ENCODE measurements at regions of chr5 and their contacts with region 1.

Region 1: GRCh38 chr5:157651623-157652549 is at the start of gene SOX30:
- DNase-seq: peak; percentile 77
- ATAC-seq: peak; percentile 97
- H3K4me3 Mint-ChIP-seq: peak within 1 kb of the TSS; percentile 84
- H3K27ac Mint-ChIP-seq: peak within 1 kb of the TSS; percentile 86
- H3K4me1 Mint-ChIP-seq: peaks cover 50% of the 10 kb centered on the region
- H3K27me3 Mint-ChIP-seq: no peaks in the 10 kb centered on the region
- CTCF ChIP-seq: no peak
- total RNA-seq, gene SOX30: 0.37 and 0.47 TPM in 2 replicates

Region 2: GRCh38 chr5:157342822-157343402 is 309.0 kb before region 1 on chr5:
- CTCF ChIA-PET with region 1: no interaction called
- POLR2A ChIA-PET with region 1: no interaction called
- intact Hi-C with region 1: no loop called
- DNase-seq: peak; percentile 27
- ATAC-seq: peak; percentile 50
- H3K4me3 Mint-ChIP-seq: no peak overlapping the region
- H3K27ac Mint-ChIP-seq: no peak overlapping the region
- H3K4me1 Mint-ChIP-seq: no peaks in the 10 kb centered on the region
- H3K27me3 Mint-ChIP-seq: no peaks in the 10 kb centered on the region
- CTCF ChIP-seq: no peak

Region 3: GRCh38 chr5:157486221-157486681 is 165.6 kb before region 1 on chr5:
- CTCF ChIA-PET with region 1: interaction called, 3 read pairs
- POLR2A ChIA-PET with region 1: interaction called, 3 read pairs
- intact Hi-C with region 1: loop called (anchors 2 kb)
- DNase-seq: no peak
- ATAC-seq: peak; percentile 33
- H3K4me3 Mint-ChIP-seq: peak overlapping the region; percentile 56
- H3K27ac Mint-ChIP-seq: peak overlapping the region; percentile 95
- H3K4me1 Mint-ChIP-seq: peaks cover 86% of the 10 kb centered on the region
- H3K27me3 Mint-ChIP-seq: no peaks in the 10 kb centered on the region
- CTCF ChIP-seq: no peak

Region 4: DNA sequence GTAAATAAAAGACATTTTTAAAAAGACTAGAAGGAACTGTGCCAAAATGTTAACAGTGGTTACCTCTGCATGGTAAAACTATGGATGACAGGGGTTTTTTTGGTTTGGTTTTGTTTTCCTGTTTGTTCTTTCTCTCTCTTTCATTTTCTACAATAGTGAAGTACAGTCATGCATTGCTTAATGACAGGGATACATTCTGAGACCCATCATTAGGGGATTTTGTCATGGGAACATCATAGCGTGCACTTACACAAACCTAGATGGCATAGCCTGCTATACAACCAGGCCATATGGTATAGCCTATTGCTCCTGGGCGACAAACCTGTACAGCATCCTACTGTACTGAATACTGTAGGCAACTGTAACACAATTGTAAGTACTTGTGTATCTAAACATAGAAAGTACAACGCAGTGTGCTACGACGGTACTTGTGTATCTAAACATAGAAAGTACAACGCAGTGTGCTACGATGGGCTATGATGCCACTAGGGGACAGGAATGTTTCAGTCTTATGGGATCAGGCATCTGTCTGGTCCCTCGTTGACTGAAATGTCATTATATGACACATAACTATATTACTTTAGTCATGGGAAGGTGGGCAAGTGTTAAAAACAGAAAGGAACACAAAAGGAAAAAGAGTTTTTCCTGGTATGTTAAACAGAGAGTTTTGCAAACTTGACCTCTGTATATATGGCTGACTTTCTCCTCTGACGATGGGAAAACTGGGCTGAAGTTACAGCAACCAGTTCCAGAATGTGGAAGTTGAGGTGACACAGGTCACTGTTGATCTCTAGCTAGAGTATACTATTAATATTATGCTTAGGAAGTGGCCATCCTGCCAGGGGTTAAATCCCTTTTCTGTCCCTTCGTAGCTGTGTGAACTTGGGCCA is 68.9 kb before region 1 on chr5:
- CTCF ChIA-PET with region 1: no interaction called
- POLR2A ChIA-PET with region 1: interaction called, 10 read pairs
- intact Hi-C with region 1: no loop called
- DNase-seq: no peak
- ATAC-seq: peak; percentile 56
- H3K4me3 Mint-ChIP-seq: peak overlapping the region; percentile 1
- H3K27ac Mint-ChIP-seq: peak overlapping the region; percentile 62
- H3K4me1 Mint-ChIP-seq: peaks cover 54% of the 10 kb centered on the region
- H3K27me3 Mint-ChIP-seq: no peaks in the 10 kb centered on the region
- CTCF ChIP-seq: no peak

Region 5: DNA sequence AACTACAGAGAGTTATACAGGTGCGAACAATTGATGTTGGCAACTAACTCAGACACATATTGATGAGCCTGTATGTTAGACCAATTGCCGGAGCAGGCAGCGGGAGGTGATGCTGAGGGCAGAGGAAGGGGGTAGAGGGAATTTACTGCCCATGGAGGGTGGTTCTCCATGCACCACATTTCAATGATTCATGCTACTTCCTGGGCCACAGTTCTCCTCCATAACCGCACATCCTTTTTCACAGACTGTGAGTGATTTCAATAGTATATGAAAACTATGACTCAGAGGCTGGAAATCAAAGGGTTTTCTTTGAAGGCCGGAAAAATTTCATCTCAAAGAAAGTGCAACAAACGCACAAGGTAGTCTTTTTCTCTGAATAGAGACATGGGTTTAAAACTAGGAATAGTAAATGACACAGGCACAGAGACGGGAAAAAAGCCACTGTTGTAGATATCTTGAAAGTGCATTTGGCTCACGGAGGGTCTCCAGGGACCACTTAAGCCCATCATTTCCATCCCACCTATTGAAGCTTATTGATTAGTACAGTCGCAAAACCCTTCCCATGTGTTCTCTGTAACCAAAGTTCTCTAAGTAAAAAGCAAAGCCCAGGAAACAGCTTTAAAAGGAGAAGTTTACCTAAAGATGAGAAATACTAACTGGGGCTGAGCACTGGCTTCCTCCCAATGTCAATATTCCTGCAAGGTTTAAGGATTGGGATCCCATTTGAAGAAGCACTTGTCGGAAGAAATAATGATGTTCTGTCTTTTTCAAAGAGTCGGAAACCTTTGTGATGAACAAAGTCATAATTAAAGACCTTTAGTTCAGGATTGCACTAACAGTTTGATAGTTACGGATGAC is 48.3 kb before region 1 on chr5:
- CTCF ChIA-PET with region 1: no interaction called
- POLR2A ChIA-PET with region 1: interaction called, 6 read pairs
- intact Hi-C with region 1: loop called (anchors 1 kb)
- DNase-seq: no peak
- ATAC-seq: peak; percentile 48
- H3K4me3 Mint-ChIP-seq: peak overlapping the region; percentile 25
- H3K27ac Mint-ChIP-seq: peak overlapping the region; percentile 83
- H3K4me1 Mint-ChIP-seq: peaks cover 85% of the 10 kb centered on the region
- H3K27me3 Mint-ChIP-seq: no peaks in the 10 kb centered on the region
- CTCF ChIP-seq: no peak

Region 6: DNA sequence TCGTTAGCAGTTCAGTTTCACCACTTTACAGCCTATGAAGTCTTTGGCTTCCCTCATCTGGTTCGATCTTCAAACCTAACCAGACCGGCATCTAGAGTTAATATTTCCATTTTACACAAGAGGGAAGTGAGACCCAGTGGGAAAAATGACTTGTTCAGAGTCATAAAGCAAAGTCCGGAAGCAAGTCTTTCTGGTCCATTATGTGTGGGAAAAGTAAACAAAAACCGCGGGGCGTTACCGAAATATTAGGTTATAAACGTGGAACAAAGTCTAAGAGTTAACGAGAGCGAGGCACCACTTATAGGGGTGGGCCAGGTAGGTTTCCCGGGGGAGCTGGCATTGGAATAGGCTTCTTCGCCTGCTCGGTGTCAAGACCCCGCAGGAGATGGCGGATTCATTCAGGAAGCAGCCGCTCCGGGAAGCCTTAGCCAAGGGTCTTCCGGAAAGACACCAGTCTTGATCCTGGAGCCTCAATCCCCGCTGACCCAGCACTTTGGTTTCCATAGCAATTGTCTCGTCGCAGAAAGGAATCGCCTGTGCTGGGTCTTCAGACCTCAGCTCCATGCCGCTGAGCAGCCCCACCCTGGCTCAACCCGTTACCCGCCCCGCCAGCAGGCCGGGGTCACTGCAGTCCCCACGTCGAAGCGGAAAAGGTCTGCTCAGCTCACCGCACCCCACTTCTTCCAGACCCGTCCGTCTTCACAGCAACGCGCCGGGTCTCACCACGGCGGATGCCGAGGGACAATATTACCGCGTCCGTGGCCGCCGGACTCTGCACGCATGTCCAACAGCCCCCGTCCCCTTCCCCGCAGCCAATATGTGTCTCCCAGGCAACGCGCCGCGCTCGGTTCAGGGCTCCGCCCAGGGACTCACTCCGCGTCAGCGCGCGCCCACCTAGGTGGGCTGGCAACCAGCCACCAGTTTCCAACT is 19.0 kb after region 1 on chr5 and contains the start of gene C5orf52:
- CTCF ChIA-PET with region 1: interaction called, 3 read pairs
- POLR2A ChIA-PET with region 1: interaction called, 4 read pairs
- intact Hi-C with region 1: loop called (anchors 2 kb)
- DNase-seq: no peak
- ATAC-seq: peak; percentile 55
- H3K4me3 Mint-ChIP-seq: peak within 1 kb of the TSS; percentile 95
- H3K27ac Mint-ChIP-seq: peak within 1 kb of the TSS; percentile 65
- H3K4me1 Mint-ChIP-seq: peaks cover 28% of the 10 kb centered on the region
- H3K27me3 Mint-ChIP-seq: no peaks in the 10 kb centered on the region
- CTCF ChIP-seq: no peak
- total RNA-seq, gene C5orf52: not detected in 2 replicates

Region 7: DNA sequence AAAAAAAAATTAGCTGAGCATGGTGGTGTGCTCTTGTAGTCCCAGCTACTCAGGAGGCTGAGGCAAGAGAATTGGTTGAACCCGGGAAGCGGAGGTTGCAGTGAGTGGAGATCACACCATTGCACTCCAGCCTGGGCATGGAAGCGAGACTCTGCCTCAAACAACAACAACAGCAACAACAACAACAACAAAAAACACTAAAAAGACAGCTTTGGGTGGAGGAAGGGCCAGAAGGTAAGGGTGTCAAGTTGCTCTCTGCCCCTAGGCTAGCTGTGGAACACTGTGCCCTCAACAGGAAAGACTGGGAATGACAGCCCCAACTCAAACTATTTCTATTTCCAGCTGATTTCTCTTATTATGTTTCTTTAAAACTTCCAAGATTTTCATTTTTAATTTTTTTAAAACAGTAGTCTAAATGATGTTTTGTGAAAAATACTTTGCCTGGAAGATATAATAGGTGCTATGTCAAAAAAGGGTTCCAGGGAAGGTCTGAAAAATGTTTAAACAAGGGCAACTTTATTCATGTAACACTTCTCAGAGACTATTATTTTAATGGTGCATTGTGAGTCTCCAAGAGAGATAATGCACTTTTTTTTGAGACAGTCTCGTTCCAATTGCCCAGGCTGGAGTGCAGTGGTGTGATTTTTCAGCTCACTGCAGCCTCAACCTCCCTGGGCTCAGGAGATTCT is 177.2 kb after region 1 on chr5:
- CTCF ChIA-PET with region 1: no interaction called
- POLR2A ChIA-PET with region 1: no interaction called
- intact Hi-C with region 1: no loop called
- DNase-seq: no peak
- ATAC-seq: no peak
- H3K4me3 Mint-ChIP-seq: no peak overlapping the region
- H3K27ac Mint-ChIP-seq: peak overlapping the region; percentile 31
- H3K4me1 Mint-ChIP-seq: peaks cover 69% of the 10 kb centered on the region
- H3K27me3 Mint-ChIP-seq: no peaks in the 10 kb centered on the region
- CTCF ChIP-seq: no peak

Region 8: DNA sequence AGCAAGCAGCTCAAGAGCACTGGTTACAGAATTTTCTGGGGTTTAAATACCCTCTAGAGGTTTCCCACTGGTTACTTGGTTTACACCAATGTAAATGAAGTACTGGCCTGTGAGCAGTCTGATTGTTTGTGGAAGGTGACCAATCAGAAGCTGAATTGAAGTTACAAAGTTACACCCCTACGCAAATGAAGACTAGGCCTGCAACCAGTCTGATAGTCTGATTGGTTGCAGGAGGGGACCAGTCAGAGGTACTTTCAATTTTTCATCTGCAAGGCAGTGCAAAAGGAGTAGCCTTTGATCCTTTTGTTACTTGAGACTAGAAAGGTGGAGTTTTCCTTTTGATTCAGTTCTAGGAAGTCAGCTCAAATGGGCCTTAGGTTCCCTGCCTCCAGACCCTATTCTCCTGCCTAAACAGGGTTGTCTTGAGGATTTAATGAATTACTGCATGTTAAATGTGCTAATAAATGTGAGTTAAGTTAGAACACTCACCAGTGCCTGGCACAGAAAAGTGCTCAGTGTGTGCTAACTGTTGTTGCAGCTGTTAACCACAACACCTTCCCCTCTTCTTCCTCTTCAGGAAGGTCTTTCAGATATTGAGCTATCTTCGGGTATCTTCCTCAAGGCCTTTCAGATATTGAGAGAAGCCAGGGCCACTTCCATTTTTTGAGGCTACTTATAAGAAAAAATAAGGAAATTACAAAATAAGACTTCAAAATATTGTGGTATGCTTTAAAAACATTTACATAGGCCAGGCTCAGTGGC is 239.1 kb after region 1 on chr5:
- CTCF ChIA-PET with region 1: no interaction called
- POLR2A ChIA-PET with region 1: no interaction called
- intact Hi-C with region 1: no loop called
- DNase-seq: no peak
- ATAC-seq: no peak
- H3K4me3 Mint-ChIP-seq: no peak overlapping the region
- H3K27ac Mint-ChIP-seq: no peak overlapping the region
- H3K4me1 Mint-ChIP-seq: no peaks in the 10 kb centered on the region
- H3K27me3 Mint-ChIP-seq: no peaks in the 10 kb centered on the region
- CTCF ChIP-seq: no peak

Measured in activated B cell treated with CpG ODN at 0.5 μM for 24 hours (primary cell).